Calu3 (cell line): ENCODE measurements at regions of chr3 and their contacts with region 1.

Region 1: DNA sequence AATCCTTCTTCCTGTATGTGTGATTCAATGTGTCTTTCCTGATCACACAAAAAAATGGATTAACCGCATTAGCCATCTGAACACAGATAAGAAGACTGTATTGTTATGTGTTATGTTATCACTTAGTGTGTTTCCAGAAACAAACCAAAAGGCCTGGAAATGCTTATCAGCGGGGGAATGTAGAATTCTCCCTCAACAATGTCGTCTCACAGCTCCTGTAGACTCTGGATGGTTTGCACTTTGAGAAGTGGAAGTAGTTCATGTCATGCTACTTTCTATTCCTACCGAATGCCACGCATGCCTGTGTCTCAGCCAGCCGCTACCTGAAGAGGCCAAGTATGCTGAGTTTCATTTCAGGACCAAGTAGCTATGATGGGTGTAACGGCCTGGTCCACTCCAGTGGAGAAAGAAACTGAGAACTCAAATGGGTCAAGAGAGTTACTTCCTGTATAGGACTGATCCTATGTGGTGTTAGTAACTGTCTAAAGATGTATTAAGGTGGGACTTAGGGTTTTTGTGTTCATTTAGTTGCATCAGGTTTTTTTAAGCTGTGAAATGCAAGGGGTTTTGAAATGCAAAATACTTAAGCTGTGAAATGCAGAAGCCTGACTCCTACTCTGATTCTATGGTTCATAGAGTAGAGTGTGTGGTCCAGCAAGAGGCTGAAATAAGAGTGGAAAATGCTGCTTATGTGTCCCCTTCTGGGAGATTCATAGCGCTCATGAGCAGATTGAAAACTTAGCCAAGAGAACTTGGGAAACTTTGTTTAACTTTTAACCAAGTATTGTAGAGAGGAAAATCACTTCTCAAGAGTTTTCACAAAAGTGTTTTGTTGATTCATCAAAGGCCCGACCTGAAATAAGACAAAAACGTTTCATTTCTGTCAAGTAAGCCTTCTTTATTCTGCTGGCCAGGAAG is 118.5 kb upstream of the LMOD3 start:
- DNase-seq: no peak
- H3K4me3 Mint-ChIP-seq: no peak overlapping the region
- H3K27ac Mint-ChIP-seq: peak overlapping the region; percentile 36
- H3K4me1 Mint-ChIP-seq: peaks cover 26% of the 10 kb centered on the region
- H3K27me3 Mint-ChIP-seq: no peaks in the 10 kb centered on the region
- CTCF ChIP-seq: no peak

Region 2: GRCh38 chr3:69200384-69201068 is 40.4 kb before region 1 on chr3:
- CTCF ChIA-PET with region 1: interaction called, 9 read pairs
- intact Hi-C with region 1: loop called (anchors 5 kb)
- DNase-seq: peak; percentile 61
- H3K4me3 Mint-ChIP-seq: peak overlapping the region; percentile 77
- H3K27ac Mint-ChIP-seq: peak overlapping the region; percentile 95
- H3K4me1 Mint-ChIP-seq: peaks cover 44% of the 10 kb centered on the region
- H3K27me3 Mint-ChIP-seq: no peaks in the 10 kb centered on the region
- CTCF ChIP-seq: no peak

Region 3: GRCh38 chr3:69226076-69226475 is 14.8 kb before region 1 on chr3:
- CTCF ChIA-PET with region 1: interaction called, 11 read pairs
- intact Hi-C with region 1: no loop called
- DNase-seq: no peak
- H3K4me3 Mint-ChIP-seq: peak overlapping the region; percentile 33
- H3K27ac Mint-ChIP-seq: peak overlapping the region; percentile 73
- H3K4me1 Mint-ChIP-seq: peaks cover 45% of the 10 kb centered on the region
- H3K27me3 Mint-ChIP-seq: no peaks in the 10 kb centered on the region
- CTCF ChIP-seq: no peak